B cell (primary cell): ENCODE measurements at regions of chr2 and their contacts with region 1.

Region 1: GRCh38 chr2:74458132-74458925 is at the start of gene WBP1:
- DNase-seq: peak; percentile 100
- ATAC-seq: peak; percentile 79
- H3K4me3 ChIP-seq: peak within 1 kb of the TSS; percentile 80 to 100 (median 93)
- H3K4me3 Mint-ChIP-seq: peak within 1 kb of the TSS; percentile 94
- H3K27ac ChIP-seq: peak within 1 kb of the TSS; percentile 97 to 100
- H3K27ac Mint-ChIP-seq: peak within 1 kb of the TSS; percentile 99
- H3K4me1 ChIP-seq: peaks cover 33 to 40% of the 10 kb centered on the region in 2 donors
- H3K4me1 Mint-ChIP-seq: peaks cover 56% of the 10 kb centered on the region
- H3K27me3 ChIP-seq: no peaks in the 10 kb centered on the region
- H3K27me3 Mint-ChIP-seq: no peaks in the 10 kb centered on the region
- CTCF ChIP-seq: no peak
- total RNA-seq, gene WBP1: 91.5 and 98.4 TPM in 2 replicates

Region 2: GRCh38 chr2:73993376-73994145 is 464.8 kb before region 1 on chr2:
- CTCF ChIA-PET with region 1: no interaction called
- POLR2A ChIA-PET with region 1: no interaction called
- intact Hi-C with region 1: no loop called
- DNase-seq: no peak
- ATAC-seq: no peak
- H3K4me3 ChIP-seq: no peak overlapping the region
- H3K4me3 Mint-ChIP-seq: no peak overlapping the region
- H3K27ac ChIP-seq: no peak overlapping the region
- H3K27ac Mint-ChIP-seq: peak overlapping the region; percentile 46
- H3K4me1 ChIP-seq: peaks cover 25 to 37% of the 10 kb centered on the region in 2 donors
- H3K4me1 Mint-ChIP-seq: peaks cover 72% of the 10 kb centered on the region
- H3K27me3 ChIP-seq: no peaks in the 10 kb centered on the region
- H3K27me3 Mint-ChIP-seq: no peaks in the 10 kb centered on the region
- CTCF ChIP-seq: no peak

Region 3: DNA sequence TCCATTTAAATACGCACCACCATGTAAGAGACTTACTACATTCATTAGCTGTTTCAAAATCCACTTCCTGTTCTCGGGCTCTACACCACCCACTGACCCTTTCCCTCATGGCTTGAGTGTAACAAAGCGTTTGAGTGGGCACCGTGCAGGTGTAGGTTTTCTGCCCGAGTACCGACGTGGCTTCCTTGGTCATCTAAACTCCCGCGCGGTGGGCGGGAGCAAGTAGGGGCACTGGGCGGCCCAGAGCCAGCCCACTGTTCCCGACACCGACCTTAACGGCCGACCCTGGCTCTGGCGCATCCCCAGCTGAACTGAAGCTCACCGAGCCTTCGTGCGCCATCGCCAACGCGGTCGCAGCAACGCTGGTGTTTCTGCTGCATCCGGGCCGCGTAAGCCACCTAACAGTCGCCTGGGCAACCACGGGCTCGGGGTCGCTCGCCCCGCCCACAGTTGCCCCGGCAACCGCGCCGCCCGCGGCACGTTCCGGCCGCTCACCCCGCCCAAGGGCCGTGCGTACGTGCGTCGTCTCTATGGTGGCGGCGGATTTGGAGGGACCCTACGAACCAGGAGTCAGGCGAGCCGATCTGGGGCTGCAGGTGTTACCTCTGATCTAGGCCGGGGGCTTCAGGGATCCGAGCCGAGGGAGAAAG is 37.0 kb before region 1 on chr2 and contains the starts of genes C2orf81 and WDR54:
- CTCF ChIA-PET with region 1: interaction called, 10 read pairs
- POLR2A ChIA-PET with region 1: interaction called, 19 read pairs
- intact Hi-C with region 1: loop called (anchors 1 kb)
- DNase-seq: peak; percentile 97
- ATAC-seq: peak; percentile 90
- H3K4me3 ChIP-seq: peak within 1 kb of the TSS; percentile 61 to 98 (median 90)
- H3K4me3 Mint-ChIP-seq: peak within 1 kb of the TSS; percentile 98
- H3K27ac ChIP-seq: peak within 1 kb of the TSS; percentile 94
- H3K27ac Mint-ChIP-seq: peak within 1 kb of the TSS; percentile 99
- H3K4me1 ChIP-seq: peaks cover 29 to 41% of the 10 kb centered on the region in 2 donors
- H3K4me1 Mint-ChIP-seq: peaks cover 43% of the 10 kb centered on the region
- H3K27me3 ChIP-seq: no peaks in the 10 kb centered on the region
- H3K27me3 Mint-ChIP-seq: no peaks in the 10 kb centered on the region
- CTCF ChIP-seq: no peak
- total RNA-seq, gene C2orf81: 8.6 and 9.1 TPM in 2 replicates
- total RNA-seq, gene WDR54: 39.0 and 42.2 TPM in 2 replicates

Region 4: DNA sequence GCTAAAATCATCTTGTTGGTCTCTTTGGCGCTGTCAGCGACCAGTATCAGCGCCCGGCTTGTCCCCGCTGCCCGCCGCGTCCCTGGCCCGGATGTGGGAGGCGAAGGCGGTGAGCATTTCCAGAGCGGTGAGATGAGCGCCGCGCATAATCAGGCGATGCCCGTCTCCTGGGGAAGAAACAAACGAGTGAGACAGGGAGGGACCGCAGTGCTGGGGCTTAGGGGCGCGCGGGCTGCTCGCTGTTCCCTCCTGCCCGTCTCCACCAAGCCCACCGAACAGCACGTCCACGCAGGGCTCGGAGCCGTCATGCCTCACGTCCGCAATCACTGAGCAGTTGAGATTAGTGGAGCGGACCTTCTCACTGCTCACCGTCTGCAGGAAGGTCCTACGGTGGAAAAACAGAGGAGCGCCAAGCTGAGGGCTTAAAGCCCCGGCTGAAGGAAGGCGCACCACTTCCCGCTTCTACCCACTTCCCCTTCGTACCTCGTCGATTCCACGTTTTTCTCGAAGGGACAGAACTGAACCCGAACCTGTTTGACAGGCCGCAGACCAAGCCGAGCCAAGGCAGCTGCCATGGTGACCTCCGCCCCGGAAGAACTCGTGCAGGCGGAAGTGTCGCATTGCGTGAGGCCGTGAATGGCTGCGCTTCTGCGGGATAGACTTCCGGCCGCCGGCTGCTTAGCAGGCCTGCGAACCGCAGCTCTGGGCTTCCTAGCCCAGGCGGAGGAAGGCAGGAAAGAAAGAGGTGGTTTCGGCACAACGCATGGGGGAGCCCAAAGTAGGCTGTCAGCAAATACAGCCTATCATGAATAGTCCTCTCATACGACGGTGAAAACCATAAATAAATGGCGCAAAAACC is 14.0 kb after region 1 on chr2 and contains the start of gene MRPL53:
- CTCF ChIA-PET with region 1: interaction called, 6 read pairs
- POLR2A ChIA-PET with region 1: interaction called, 63 read pairs
- intact Hi-C with region 1: loop called (anchors 1 kb)
- DNase-seq: peak; percentile 97
- ATAC-seq: peak; percentile 93
- H3K4me3 ChIP-seq: peak within 1 kb of the TSS; percentile 65 to 89 (median 67)
- H3K4me3 Mint-ChIP-seq: peak within 1 kb of the TSS; percentile 99
- H3K27ac ChIP-seq: peak within 1 kb of the TSS; percentile 69 to 94
- H3K27ac Mint-ChIP-seq: peak within 1 kb of the TSS; percentile 99
- H3K4me1 ChIP-seq: peaks cover 16 to 22% of the 10 kb centered on the region in 2 donors
- H3K4me1 Mint-ChIP-seq: peaks cover 20% of the 10 kb centered on the region
- H3K27me3 ChIP-seq: no peaks in the 10 kb centered on the region
- H3K27me3 Mint-ChIP-seq: no peaks in the 10 kb centered on the region
- CTCF ChIP-seq: no peak
- total RNA-seq, gene MRPL53: 61.5 and 70.0 TPM in 2 replicates

Region 5: DNA sequence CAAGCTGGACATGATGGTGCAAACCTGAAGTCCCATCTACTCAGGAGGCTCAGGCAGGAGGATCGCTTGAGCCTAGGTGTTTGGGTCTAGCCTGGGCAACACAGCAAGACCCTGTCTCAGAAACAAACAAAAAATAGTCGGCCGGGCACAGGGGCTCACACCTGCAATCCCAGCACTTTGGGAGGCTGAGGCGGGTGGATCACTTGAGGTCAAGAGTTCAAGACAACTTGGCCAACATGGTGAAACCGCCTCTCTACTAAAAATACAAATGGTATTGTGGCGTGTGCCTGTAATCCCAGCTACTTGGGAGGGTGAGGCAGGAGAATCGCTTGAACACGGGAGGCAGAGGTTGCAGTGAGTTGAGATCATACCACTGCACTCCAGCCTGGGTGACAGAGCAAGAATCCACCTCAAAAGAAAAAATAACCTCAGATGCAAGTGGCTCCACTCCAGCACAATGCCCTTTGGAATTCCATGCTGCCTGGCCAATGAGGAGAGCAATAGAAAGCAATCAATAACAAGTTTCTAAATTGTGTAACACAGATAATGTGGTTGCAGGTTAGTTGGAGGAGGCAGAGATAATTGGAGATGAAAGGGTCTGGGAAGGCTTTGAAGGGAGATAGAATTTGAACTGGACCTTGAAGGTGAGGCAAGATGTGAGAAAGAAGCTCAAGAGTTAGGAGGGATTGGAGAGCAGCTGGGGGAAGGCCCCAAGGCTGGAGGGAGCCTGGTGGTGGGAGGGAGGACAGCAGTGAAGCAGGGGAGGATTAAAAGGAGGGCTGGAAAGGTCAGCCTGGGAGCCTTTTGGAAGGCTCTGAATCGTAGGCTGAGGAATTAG is 30.5 kb after region 1 on chr2:
- CTCF ChIA-PET with region 1: no interaction called
- POLR2A ChIA-PET with region 1: no interaction called
- intact Hi-C with region 1: no loop called
- DNase-seq: no peak
- ATAC-seq: no peak
- H3K4me3 ChIP-seq: no peak overlapping the region
- H3K4me3 Mint-ChIP-seq: no peak overlapping the region
- H3K27ac ChIP-seq: no peak overlapping the region
- H3K27ac Mint-ChIP-seq: no peak overlapping the region
- H3K4me1 ChIP-seq: peaks cover under 1 to 4% of the 10 kb centered on the region in 2 donors
- H3K4me1 Mint-ChIP-seq: peaks cover 6% of the 10 kb centered on the region
- H3K27me3 ChIP-seq: no peaks in the 10 kb centered on the region
- H3K27me3 Mint-ChIP-seq: no peaks in the 10 kb centered on the region
- CTCF ChIP-seq: no peak

Region 6: GRCh38 chr2:74507145-74507925 is 49.0 kb after region 1 on chr2 and contains the start of gene PCGF1:
- CTCF ChIA-PET with region 1: no interaction called
- POLR2A ChIA-PET with region 1: interaction called, 5 read pairs
- intact Hi-C with region 1: loop called (anchors 1 kb)
- DNase-seq: peak; percentile 100
- ATAC-seq: peak; percentile 85
- H3K4me3 ChIP-seq: peak within 1 kb of the TSS; percentile 78 to 97 (median 83)
- H3K4me3 Mint-ChIP-seq: peak within 1 kb of the TSS; percentile 96
- H3K27ac ChIP-seq: peak within 1 kb of the TSS; percentile 91 to 96
- H3K27ac Mint-ChIP-seq: peak within 1 kb of the TSS; percentile 99
- H3K4me1 ChIP-seq: peaks cover 31 to 38% of the 10 kb centered on the region in 2 donors
- H3K4me1 Mint-ChIP-seq: peaks cover 56% of the 10 kb centered on the region
- H3K27me3 ChIP-seq: peaks cover 0 to 56% (median 14%) of the 10 kb centered on the region in 4 experiments
- H3K27me3 Mint-ChIP-seq: peaks cover 41% of the 10 kb centered on the region
- CTCF ChIP-seq: peak; percentile 64
- total RNA-seq, gene PCGF1: 34.3 and 40.1 TPM in 2 replicates